Right lobe of liver (tissue), 6 donors: ENCODE measurements at regions of chr1 and their contacts with region 1.

Region 1: DNA sequence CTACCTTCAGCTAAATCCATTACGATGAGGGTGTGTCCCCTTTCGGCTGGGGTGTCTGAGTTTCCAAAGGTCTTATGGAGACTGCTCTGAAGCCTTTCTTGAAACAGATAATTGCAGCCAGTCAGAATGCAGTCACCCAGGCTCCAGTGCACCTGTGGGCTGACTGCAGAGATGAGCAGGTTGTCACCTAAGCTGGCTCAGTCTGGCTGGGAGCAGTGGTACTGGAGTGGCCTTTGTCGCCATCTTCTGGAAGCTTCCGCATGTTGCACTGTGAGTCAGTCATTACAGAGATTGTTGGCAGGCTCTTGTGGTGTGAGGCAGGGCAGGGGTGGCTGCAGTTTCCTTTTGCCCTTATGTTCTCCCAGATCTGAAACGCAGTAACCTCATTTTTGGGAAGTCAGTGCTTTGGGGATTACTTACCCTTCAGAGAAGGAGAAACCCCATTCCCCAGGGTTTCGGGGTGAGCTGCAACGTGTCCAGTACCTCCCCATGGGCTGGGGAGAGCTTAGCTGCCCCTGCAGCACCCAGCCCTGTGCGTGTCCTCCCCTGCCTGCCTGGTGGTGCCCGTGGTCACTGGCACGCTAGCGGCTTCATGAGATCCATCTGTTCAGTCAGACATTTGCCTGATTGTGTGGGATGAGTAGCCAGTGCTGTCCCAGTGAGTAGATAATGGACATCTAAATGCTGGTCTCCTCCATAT is 48.0 kb downstream of the SMYD2 start:
- DNase-seq: peak; percentile 79 to 83 (median 80)
- ATAC-seq: peak; percentile 94 to 98 (median 96)
- H3K4me3 ChIP-seq: no peak overlapping the region
- H3K27ac ChIP-seq: no peak overlapping the region
- H3K4me1 ChIP-seq: no peaks in the 10 kb centered on the region
- H3K27me3 ChIP-seq: no peaks in the 10 kb centered on the region
- CTCF ChIP-seq: peak; percentile 85 to 95 (median 88)
- POLR2A ChIP-seq: no peak

Region 2: GRCh38 chr1:214216774-214217173 is 112.1 kb before region 1 on chr1:
- intact Hi-C with region 1: loop called in 1 of 2 experiments (anchors 5 kb)
- DNase-seq: no peak
- ATAC-seq: peak; percentile 31 to 62 (median 42)
- H3K4me3 ChIP-seq: no peak overlapping the region
- H3K27ac ChIP-seq: no peak overlapping the region
- H3K4me1 ChIP-seq: peaks cover 0 to 9% (median 3%) of the 10 kb centered on the region in 4 donors
- H3K27me3 ChIP-seq: no peaks in the 10 kb centered on the region
- CTCF ChIP-seq: no peak
- POLR2A ChIP-seq: no peak

Region 3: GRCh38 chr1:214261206-214262123 is 67.5 kb before region 1 on chr1:
- intact Hi-C with region 1: loop called (anchors 5 kb)
- DNase-seq: peak; percentile 87 to 89 (median 88)
- ATAC-seq: peak; percentile 99 to 100 (median 100)
- H3K4me3 ChIP-seq: no peak overlapping the region
- H3K27ac ChIP-seq: no peak overlapping the region
- H3K4me1 ChIP-seq: no peaks in the 10 kb centered on the region
- H3K27me3 ChIP-seq: no peaks in the 10 kb centered on the region
- CTCF ChIP-seq: peak; percentile 96 to 99 (median 98)
- POLR2A ChIP-seq: no peak

Region 4: GRCh38 chr1:214281021-214281719 is 47.8 kb before region 1 on chr1 and contains the start of gene SMYD2:
- intact Hi-C with region 1: loop called in 1 of 2 experiments (anchors 5 kb)
- DNase-seq: peak; percentile 79 to 83 (median 83)
- ATAC-seq: peak; percentile 74 to 84 (median 80)
- H3K4me3 ChIP-seq: peak within 1 kb of the TSS; percentile 59 to 94 (median 82)
- H3K27ac ChIP-seq: peak within 1 kb of the TSS; percentile 75 to 96 (median 90)
- H3K4me1 ChIP-seq: peaks cover 0 to 18% (median 2%) of the 10 kb centered on the region in 4 donors
- H3K27me3 ChIP-seq: no peaks in the 10 kb centered on the region
- CTCF ChIP-seq: peak in 1 of 4 donors; percentile 11
- POLR2A ChIP-seq: peak; percentile 86
- total RNA-seq, gene SMYD2: 14.5 to 45.2 (median 24.1) TPM